Caco-2 (cell line): ENCODE measurements at regions of chr19 and their contacts with region 1.

Region 1: DNA sequence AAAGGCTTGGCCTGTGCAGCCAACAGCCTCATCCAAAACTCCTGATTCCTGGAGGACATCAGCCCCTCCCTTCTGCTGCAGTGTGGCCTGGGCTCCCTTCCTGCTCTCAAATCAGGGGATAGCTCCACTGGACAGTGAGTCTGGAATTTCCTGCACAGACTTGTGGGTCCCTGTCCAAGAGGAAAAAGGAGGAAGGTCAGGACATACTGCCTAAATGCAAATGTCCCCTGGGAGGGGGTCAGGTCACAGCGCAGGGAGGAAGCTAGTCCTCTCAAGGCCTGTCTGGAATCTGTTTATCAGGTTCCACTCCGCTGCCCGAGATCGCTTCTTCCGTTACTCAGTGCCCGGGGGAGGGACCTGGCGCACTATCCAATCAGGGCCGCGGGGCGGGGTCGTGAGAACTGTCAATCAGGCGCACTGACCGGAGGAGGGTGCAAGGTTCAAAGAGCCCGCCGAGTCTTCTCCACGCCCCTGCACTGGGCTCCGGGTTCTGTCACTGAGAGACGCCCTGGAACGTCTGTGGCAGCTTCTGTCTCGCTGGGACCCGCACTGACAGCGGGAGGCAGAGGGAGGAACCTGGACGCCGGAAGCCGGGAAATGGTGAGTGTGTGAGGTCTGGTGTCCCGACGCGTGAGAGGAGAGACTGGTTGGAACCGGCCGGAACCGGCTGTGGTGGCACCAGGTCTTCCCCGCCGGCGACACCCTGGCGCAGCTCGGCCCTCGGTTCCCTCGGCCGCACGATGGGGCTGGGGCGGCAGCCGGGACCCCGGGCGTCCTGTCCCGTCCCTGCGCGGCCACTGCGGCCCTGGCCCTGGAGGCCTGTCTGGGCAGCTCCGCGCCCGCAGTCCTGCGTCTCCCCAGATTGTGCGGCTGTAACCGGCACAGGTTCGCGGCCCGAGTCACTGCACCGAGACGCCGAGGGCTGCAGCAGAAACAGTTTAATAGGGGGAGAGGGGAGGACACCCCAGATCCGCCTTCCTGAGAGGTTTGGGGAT is at the start of gene ZNF441:
- DNase-seq: peak; percentile 97
- H3K4me3 ChIP-seq: peak within 1 kb of the TSS; percentile 72
- H3K4me3 Mint-ChIP-seq: peak within 1 kb of the TSS; percentile 93
- H3K27ac Mint-ChIP-seq: peak within 1 kb of the TSS; percentile 97
- H3K4me1 ChIP-seq: peaks cover 11% of the 10 kb centered on the region
- H3K4me1 Mint-ChIP-seq: peaks cover 5% of the 10 kb centered on the region
- H3K27me3 ChIP-seq: no peaks in the 10 kb centered on the region
- H3K27me3 Mint-ChIP-seq: no peaks in the 10 kb centered on the region
- CTCF ChIP-seq: no peak
- total RNA-seq, gene ZNF441: 3.2 and 4.4 TPM in 2 replicates

Region 2: DNA sequence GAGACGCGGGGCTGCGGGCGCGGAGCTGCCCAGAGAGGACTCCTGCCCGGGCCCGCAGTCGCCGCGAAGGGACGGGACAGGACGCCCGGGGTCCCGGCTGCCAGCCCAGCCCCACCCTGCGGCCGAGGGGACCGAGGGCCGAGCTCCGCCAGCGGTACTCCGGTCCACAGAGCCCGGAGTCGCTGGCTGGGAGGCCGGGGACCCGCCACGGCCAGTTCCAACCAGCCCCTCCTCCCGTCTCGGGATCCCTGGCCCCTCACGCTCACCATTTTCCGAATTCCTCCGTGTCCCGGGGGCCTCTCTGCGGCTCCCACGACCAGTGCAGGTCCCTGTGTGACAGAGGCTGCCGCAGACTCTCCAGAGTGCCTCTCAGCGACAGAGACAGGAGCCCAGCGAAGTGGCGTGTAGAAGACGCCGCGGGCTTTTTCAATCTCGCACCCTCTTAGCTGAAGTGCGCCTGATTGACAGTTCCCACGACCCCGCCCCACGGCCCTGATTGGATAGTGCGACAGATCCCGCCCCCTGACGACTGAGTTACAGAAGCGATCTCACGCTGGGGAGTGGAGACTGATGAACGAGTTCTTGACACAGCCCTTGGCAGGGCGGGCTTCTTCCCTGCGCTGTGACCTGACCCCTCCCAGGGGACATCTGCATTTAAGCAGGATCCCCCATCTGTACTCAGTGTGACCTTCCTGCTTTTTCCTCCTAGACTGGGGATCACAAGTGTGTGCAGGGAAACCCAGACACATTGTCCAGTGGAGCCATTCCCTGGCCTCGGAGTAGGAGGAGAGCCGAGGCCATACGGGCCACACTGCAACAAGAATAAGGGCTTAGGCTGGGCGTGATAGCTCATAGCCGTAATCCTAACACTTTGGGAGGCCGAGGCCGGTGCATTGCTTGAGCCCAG is 72.1 kb before region 1 on chr19:
- CTCF ChIA-PET with region 1: interaction called, 7 read pairs
- POLR2A ChIA-PET with region 1: no interaction called
- intact Hi-C with region 1: loop called (anchors 2 kb)
- DNase-seq: peak; percentile 96
- H3K4me3 ChIP-seq: peak overlapping the region; percentile 90
- H3K4me3 Mint-ChIP-seq: peak overlapping the region; percentile 99
- H3K27ac Mint-ChIP-seq: peak overlapping the region; percentile 100
- H3K4me1 ChIP-seq: peaks cover 15% of the 10 kb centered on the region
- H3K4me1 Mint-ChIP-seq: peaks cover 6% of the 10 kb centered on the region
- H3K27me3 ChIP-seq: no peaks in the 10 kb centered on the region
- H3K27me3 Mint-ChIP-seq: no peaks in the 10 kb centered on the region
- CTCF ChIP-seq: no peak

Region 3: DNA sequence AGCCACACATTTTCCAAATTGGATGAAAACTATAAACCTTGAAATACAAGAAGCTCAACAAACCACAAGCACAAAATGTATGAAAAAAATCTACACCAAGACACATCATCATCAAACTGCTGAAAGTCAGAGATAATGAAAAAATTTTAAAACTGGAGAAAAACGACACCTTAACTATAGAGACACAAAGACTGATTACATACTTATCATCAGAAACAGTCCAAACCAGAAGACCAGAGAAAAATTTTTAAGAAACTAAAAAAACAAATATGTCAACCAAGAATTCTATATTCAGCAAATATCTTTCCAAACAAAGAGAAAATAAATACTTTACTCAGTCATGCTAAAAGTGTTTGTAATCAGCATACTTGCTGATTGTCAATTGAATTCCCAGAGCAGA is 19.6 kb before region 1 on chr19:
- CTCF ChIA-PET with region 1: no interaction called
- POLR2A ChIA-PET with region 1: no interaction called
- intact Hi-C with region 1: no loop called
- DNase-seq: no peak
- H3K4me3 ChIP-seq: no peak overlapping the region
- H3K4me3 Mint-ChIP-seq: no peak overlapping the region
- H3K27ac Mint-ChIP-seq: no peak overlapping the region
- H3K4me1 ChIP-seq: no peaks in the 10 kb centered on the region
- H3K4me1 Mint-ChIP-seq: no peaks in the 10 kb centered on the region
- H3K27me3 ChIP-seq: no peaks in the 10 kb centered on the region
- H3K27me3 Mint-ChIP-seq: no peaks in the 10 kb centered on the region
- CTCF ChIP-seq: no peak